Left cardiac atrium (tissue), 4 donors: ENCODE measurements at regions of chr1 and their contacts with region 1.

Region 1: GRCh38 chr1:226121587-226122400 is 59.3 kb downstream of the H3-3A start:
- DNase-seq: peak; percentile 66
- ATAC-seq: peak; percentile 88 to 90

Region 2: DNA sequence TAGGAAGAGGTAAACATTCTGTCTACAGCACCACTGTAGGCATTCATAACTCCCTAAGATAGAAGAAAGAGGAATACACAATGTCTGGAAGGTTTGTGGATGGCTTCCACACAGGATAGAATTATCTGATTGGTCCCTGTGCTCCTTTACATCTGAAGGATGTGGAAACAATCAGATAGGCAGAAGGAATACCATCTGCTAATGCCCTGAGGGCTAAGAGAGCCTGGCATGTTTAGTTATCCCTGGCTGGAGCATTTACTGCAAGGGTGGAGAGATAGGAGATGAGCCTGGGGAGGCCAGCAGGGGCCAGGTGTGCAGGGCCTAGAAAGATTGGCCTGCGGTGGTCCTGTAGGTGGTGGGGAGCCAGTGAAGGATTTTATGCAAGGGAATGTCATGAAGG is 73.3 kb after region 1 on chr1:
- intact Hi-C with region 1: loop called (anchors 2 to 5 kb)
- DNase-seq: no peak
- ATAC-seq: no peak

Region 3: GRCh38 chr1:226268421-226269116 is 146.8 kb after region 1 on chr1:
- intact Hi-C with region 1: no loop called
- DNase-seq: no peak
- ATAC-seq: no peak

Region 4: GRCh38 chr1:226293553-226293920 is 171.7 kb after region 1 on chr1:
- intact Hi-C with region 1: no loop called
- DNase-seq: no peak
- ATAC-seq: no peak